ENCODE measurements at regions of chr11 and their contacts with region 1.

Region 1: GRCh38 chr11:1825039-1825740 is 9.6 kb upstream of the SYT8 start:
- DNase-seq: peak; percentile 36
- ATAC-seq: peak; percentile 31
- H3K4me3 ChIP-seq: no peak overlapping the region
- H3K4me3 Mint-ChIP-seq: no peak overlapping the region
- H3K27ac ChIP-seq: no peak overlapping the region
- H3K27ac Mint-ChIP-seq: no peak overlapping the region
- H3K4me1 ChIP-seq: no peaks in the 10 kb centered on the region
- H3K4me1 Mint-ChIP-seq: no peaks in the 10 kb centered on the region
- H3K27me3 ChIP-seq: peaks cover 0 to 5% (median 0%) of the 10 kb centered on the region in 4 experiments
- H3K27me3 Mint-ChIP-seq: peaks cover 14% of the 10 kb centered on the region
- CTCF ChIP-seq: no peak

Region 2: GRCh38 chr11:2002807-2003206 is 177.6 kb after region 1 on chr11:
- CTCF ChIA-PET with region 1: interaction called, 79 read pairs
- POLR2A ChIA-PET with region 1: no interaction called
- intact Hi-C with region 1: no loop called
- DNase-seq: no peak
- ATAC-seq: peak; percentile 46
- H3K4me3 ChIP-seq: no peak overlapping the region
- H3K4me3 Mint-ChIP-seq: no peak overlapping the region
- H3K27ac ChIP-seq: no peak overlapping the region
- H3K27ac Mint-ChIP-seq: no peak overlapping the region
- H3K4me1 ChIP-seq: no peaks in the 10 kb centered on the region
- H3K4me1 Mint-ChIP-seq: no peaks in the 10 kb centered on the region
- H3K27me3 ChIP-seq: no peaks in the 10 kb centered on the region
- H3K27me3 Mint-ChIP-seq: no peaks in the 10 kb centered on the region
- CTCF ChIP-seq: no peak

Measured in B cell (primary cell).